ENCODE measurements at regions of chr5 and their contacts with region 1.

Region 1: DNA sequence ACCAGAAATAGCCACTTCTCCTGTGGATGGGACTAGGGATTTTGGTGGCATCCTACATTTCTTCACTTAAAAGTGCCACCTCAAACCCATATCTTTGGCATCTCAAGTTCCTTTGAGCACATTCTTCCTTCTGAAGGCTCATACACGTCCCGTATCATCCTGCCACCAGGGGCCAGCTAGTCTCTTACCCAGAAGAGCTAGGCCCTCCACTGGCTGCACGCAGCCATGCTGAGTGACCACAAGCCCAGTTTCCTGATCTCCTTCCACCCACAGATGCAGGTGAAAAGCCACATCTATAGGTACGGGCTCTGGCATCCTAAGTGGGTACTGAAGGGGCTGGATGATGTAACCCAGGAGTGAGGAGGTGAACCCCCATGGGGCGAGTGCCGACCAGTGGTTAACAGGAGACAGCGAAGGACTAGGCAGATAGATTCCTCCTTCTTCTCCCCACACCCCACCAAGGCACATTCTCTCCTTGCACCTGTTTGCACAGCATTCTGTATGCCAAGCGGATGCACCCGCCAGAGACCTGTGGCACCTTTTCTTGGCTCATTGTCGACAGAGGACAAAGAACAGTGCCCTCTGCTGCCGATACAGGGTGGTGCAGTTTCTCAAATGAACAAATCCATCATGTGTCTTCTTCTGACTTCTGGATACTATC is 14.4 kb upstream of the SCGB3A1 start:
- DNase-seq: peak; percentile 23 to 76 (median 64)
- ATAC-seq: peak; percentile 80
- H3K4me3 ChIP-seq: no peak overlapping the region
- H3K4me3 Mint-ChIP-seq: no peak overlapping the region
- H3K27ac ChIP-seq: no peak overlapping the region
- H3K27ac Mint-ChIP-seq: no peak overlapping the region
- H3K4me1 ChIP-seq: no peaks in the 10 kb centered on the region
- H3K4me1 Mint-ChIP-seq: peaks cover 3% of the 10 kb centered on the region
- H3K27me3 ChIP-seq: no peaks in the 10 kb centered on the region
- H3K27me3 Mint-ChIP-seq: peaks cover 2% of the 10 kb centered on the region
- CTCF ChIP-seq: peak; percentile 69

Region 2: GRCh38 chr5:180523629-180524466 is 81.8 kb before region 1 on chr5:
- CTCF ChIA-PET with region 1: interaction called, 3 read pairs
- POLR2A ChIA-PET with region 1: no interaction called
- intact Hi-C with region 1: loop called in 1 of 2 experiments (anchors 2 kb)
- DNase-seq: no peak
- ATAC-seq: no peak
- H3K4me3 ChIP-seq: no peak overlapping the region
- H3K4me3 Mint-ChIP-seq: no peak overlapping the region
- H3K27ac ChIP-seq: no peak overlapping the region
- H3K27ac Mint-ChIP-seq: peak overlapping the region; percentile 19
- H3K4me1 ChIP-seq: peaks cover 22% of the 10 kb centered on the region
- H3K4me1 Mint-ChIP-seq: peaks cover 65% of the 10 kb centered on the region
- H3K27me3 ChIP-seq: no peaks in the 10 kb centered on the region
- H3K27me3 Mint-ChIP-seq: no peaks in the 10 kb centered on the region
- CTCF ChIP-seq: no peak